Activated T-helper 2 cell treated with anti-CD3 and anti-CD28 coated beads, Interferon-gamma antibody, Interleukin-2, Interleukin-4, amounts not matched to agents 10 μg/mL and 5 μg/mL and 100 μg/mL, durations not matched to agents 14 hours and 24 hours and 36 hours (primary cell): ENCODE measurements at regions of chr4 and their contacts with region 1.

Region 1: GRCh38 chr4:168831919-168832762 is 177.9 kb downstream of the CBR4 start:
- DNase-seq: peak; percentile 57
- H3K4me3 Mint-ChIP-seq: peak overlapping the region; percentile 79
- H3K27ac Mint-ChIP-seq: peak overlapping the region; percentile 33
- H3K4me1 Mint-ChIP-seq: peaks cover 28% of the 10 kb centered on the region
- H3K27me3 Mint-ChIP-seq: peaks cover 41% of the 10 kb centered on the region

Region 2: GRCh38 chr4:168731006-168731636 is 101.0 kb before region 1 on chr4:
- intact Hi-C with region 1: no loop called
- DNase-seq: no peak
- H3K4me3 Mint-ChIP-seq: no peak overlapping the region
- H3K27ac Mint-ChIP-seq: no peak overlapping the region
- H3K4me1 Mint-ChIP-seq: peaks cover 2% of the 10 kb centered on the region
- H3K27me3 Mint-ChIP-seq: peaks cover 14% of the 10 kb centered on the region

Region 3: DNA sequence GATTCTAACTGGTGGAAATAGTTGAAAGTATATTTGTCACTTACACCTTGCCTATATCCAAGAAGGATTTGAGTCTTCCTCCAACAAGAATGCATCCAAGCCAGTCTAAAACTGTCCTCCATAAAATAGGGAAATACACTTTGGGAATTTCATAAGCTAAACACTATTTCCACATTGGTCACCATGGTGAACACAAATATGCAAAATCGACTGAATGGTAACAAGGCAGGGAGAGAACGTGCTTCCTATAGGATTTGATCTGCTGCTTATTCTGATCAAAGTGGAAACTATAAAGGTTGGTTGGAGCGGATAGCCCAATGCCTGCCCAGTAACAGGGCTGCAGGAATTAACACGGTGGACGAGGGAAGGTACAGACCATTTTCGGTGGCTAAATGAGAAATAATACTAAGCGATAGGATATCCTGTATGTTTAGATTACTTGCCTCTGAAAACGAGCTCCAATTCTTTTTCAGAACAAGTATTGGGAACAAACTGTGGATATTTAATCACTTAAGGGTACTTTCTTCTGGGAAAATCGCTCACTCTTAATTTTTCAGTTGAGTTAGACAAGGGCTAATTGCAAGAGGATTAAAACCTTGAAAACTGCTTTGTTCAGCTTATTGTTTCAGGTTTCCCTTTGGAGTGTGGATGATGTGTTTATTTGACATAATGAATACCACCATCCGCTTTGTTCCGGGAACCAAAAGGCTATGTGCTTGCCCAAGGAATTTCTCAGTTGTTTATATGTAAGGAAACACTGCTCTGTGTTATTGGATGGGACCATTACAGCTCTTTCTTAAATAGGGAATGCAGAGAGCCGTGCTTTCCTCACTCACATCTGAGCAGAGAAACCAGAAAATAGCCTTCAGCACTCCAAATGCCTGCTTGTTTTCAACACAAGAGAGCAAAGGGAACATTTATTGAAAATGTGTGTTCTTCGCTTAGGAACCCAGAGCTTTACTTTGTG is 16.5 kb before region 1 on chr4:
- intact Hi-C with region 1: loop called (anchors 1 kb)
- DNase-seq: no peak
- H3K4me3 Mint-ChIP-seq: no peak overlapping the region
- H3K27ac Mint-ChIP-seq: no peak overlapping the region
- H3K4me1 Mint-ChIP-seq: peaks cover 17% of the 10 kb centered on the region
- H3K27me3 Mint-ChIP-seq: peaks cover 40% of the 10 kb centered on the region

Region 4: DNA sequence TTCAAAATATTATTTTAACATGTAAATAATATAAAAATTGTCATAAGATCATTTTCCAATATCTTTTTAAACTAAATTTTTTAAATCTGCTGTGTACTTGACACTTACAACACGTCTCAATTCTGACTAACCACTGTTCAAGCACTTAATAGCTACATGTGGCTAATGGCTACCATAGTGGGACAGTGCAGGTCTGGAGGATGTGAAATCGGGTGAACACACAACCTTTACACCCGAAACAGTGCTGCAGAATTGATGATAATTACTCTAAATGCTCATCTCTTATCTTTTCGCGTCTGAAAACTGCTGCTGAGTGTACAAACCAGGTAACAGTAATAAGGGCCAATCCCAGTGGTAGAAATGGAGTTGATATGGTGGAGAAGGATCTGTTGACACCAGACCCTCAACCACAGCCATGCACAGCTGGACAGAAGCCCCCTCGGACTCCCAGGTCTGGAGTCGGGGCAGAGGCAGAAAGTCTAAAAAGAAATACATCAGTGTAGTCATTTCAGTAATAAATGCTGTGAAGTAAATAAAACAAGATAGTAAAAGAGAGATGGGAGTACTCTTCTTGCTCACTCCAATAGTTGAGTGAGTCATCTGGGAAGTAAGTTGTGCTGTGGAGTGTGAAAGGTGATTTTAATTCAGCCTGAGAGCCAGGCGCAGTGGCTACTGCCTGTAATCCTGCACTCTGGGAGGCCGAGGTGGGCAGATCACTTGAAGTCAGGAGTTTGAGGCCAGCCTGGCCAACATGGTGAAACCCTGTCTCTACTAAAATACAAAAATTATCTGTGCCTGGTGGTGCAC is 27.9 kb after region 1 on chr4:
- intact Hi-C with region 1: no loop called
- DNase-seq: no peak
- H3K4me3 Mint-ChIP-seq: no peak overlapping the region
- H3K27ac Mint-ChIP-seq: peak overlapping the region; percentile 82
- H3K4me1 Mint-ChIP-seq: peaks cover 63% of the 10 kb centered on the region
- H3K27me3 Mint-ChIP-seq: no peaks in the 10 kb centered on the region

Region 5: DNA sequence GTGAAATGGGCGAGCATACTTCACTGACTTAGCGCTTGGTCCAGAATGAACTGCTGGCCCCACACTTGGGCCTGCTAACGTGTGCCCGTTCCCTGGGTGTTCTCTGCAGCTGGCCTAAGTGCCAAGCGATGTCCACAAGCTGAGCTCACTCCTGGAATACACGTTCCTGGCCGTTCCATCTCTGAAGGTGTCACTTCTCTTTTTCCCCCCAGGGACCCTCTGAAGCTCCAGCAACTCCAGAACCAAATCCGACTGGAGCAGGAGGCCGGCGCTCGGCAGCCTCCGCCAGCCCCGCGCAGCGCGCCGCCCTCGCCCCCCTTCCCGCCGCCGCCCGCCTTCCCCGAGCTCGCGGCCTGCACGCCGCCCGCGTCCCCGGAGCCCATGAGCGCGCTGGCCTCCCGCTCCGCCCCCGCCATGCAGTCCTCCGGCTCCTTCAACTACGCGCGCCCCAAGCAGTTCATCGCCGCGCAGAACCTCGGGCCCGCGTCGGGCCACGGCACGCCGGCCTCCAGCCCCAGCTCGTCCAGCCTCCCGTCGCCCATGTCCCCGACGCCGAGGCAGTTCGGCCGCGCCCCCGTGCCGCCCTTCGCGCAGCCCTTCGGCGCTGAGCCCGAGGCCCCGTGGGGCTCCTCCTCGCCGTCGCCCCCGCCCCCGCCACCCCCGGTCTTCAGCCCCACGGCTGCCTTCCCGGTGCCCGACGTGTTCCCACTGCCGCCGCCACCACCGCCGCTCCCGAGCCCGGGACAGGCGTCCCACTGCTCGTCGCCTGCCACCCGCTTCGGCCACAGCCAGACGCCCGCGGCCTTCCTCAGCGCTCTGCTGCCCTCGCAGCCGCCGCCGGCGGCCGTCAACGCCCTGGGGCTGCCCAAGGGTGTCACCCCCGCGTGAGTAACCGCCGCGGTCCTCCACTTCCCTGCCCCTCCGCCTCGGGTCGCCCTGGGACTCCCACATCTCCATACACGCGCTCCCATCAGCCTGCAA is 45.7 kb after region 1 on chr4:
- intact Hi-C with region 1: loop called (anchors 2 kb)
- DNase-seq: no peak
- H3K4me3 Mint-ChIP-seq: peak overlapping the region; percentile 78
- H3K27ac Mint-ChIP-seq: peak overlapping the region; percentile 69
- H3K4me1 Mint-ChIP-seq: peaks cover 35% of the 10 kb centered on the region
- H3K27me3 Mint-ChIP-seq: peaks cover 40% of the 10 kb centered on the region

Region 6: DNA sequence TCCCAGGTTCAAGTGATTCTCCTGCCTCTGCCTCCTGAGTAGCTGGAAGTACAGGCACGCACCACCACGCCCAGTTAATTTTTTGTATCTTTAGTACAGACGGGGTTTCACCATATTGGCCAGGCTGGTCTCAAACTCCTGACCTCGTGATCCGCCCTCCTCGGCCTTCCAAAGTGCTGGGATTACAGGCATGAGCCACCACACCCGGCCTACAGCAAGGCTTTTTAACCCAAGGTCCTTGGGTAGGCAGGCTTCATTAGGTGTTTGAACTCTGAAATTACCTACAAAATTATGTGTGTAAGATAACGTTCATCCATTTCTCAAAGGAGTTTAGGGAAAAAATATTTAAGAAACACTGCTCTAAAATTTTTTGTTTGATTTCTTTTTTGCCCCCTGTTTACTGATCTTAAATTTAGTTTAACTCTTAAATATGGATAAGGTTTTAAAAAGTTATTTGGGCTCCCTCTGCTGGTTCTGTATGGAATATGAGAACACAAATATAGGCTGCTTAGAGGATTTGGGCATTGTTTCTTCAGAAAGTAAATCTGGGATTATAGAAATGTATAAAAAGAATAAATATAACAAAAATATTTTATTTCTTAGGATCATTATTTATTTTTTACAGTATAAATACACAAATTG is 85.1 kb after region 1 on chr4:
- intact Hi-C with region 1: loop called (anchors 5 kb)
- DNase-seq: no peak
- H3K4me3 Mint-ChIP-seq: no peak overlapping the region
- H3K27ac Mint-ChIP-seq: no peak overlapping the region
- H3K4me1 Mint-ChIP-seq: no peaks in the 10 kb centered on the region
- H3K27me3 Mint-ChIP-seq: no peaks in the 10 kb centered on the region